Caco-2 (cell line): ENCODE measurements at regions of chr16 and their contacts with region 1.

Region 1: GRCh38 chr16:81885976-81886586 is 107.0 kb downstream of the PLCG2 start:
- DNase-seq: peak in 1 of 2 experiments; percentile 65
- H3K4me3 ChIP-seq: no peak overlapping the region
- H3K4me3 Mint-ChIP-seq: no peak overlapping the region
- H3K27ac Mint-ChIP-seq: no peak overlapping the region
- H3K4me1 ChIP-seq: peaks cover 48% of the 10 kb centered on the region
- H3K4me1 Mint-ChIP-seq: peaks cover 41% of the 10 kb centered on the region
- H3K27me3 ChIP-seq: no peaks in the 10 kb centered on the region
- H3K27me3 Mint-ChIP-seq: no peaks in the 10 kb centered on the region
- CTCF ChIP-seq: peak; percentile 67 to 82

Region 2: DNA sequence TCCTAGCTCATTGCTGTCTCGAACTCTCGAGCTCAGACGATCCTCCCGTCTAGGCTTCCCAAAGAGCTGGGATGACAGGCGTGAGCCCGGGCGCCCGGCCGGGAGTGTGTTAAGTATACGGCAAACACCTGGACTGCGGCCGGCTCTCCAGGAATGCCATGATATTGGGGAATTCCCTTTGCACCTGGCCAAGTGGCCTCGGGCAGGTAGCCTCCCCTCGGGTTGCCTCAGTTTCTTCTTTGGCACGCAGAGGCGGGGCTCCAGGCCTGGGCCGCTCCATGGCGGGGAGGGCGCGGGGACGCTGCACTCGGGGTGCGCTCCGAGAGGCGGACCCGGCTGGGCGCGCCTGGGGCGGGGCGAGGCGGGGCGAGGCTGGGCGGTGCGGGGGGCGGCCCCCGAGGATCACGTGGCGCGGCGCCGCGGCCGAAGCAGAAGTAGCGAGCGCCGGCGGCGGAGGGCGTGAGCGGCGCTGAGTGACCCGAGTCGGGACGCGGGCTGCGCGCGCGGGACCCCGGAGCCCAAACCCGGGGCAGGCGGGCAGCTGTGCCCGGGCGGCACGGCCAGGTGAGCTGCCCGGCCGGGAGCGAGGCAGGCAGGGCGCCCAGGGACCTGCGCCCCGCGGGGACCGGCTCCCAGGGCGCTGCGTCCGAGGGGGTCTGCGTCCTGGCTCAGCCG is 107.1 kb before region 1 on chr16 and contains the start of gene PLCG2:
- CTCF ChIA-PET with region 1: interaction called, 4 read pairs
- POLR2A ChIA-PET with region 1: no interaction called
- intact Hi-C with region 1: loop called (anchors 5 kb)
- DNase-seq: peak; percentile 80 to 91
- H3K4me3 ChIP-seq: peak within 1 kb of the TSS; percentile 72
- H3K4me3 Mint-ChIP-seq: peak within 1 kb of the TSS; percentile 73
- H3K27ac Mint-ChIP-seq: peak within 1 kb of the TSS; percentile 67
- H3K4me1 ChIP-seq: peaks cover 7% of the 10 kb centered on the region
- H3K4me1 Mint-ChIP-seq: peaks cover 19% of the 10 kb centered on the region
- H3K27me3 ChIP-seq: 0 out of 2 replicates have a peak, but pooled peaks cover 1% of the 10 kb centered on the region
- H3K27me3 Mint-ChIP-seq: peaks cover 6% of the 10 kb centered on the region
- CTCF ChIP-seq: no peak
- total RNA-seq, gene PLCG2: 10.3 and 14.4 TPM in 2 replicates

Region 3: DNA sequence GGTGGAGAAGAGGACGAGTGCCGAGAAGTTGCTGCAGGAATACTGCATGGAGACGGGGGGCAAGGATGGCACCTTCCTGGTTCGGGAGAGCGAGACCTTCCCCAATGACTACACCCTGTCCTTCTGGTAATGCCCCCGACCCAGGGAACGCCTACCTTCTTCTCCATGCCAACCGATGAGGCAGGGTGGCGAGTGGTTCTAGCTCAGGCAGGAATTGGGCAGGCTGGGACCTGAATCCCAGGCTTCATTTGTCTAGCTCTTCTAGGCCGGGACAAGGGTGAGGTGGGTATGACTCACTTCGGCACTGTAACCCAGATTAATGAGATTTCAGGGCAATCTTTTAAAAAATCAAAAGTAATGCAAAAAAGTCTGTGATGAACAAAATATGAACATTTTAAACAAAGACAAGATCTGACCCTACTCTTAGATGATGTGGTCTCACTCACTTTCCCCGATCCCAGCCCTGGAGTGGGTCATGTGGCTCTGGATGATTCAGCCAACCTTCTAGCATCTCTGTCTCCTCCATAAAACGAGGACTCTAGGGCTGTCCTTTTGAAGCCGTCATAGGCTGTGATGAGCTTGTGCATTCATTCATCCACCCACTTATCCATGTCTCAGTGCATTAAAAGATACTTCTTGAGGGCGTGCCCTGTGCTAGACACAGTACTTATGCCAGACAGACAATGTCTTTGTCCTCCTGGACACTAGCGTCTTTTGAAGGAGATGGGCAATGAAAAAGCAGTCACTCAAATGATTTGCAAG is 22.6 kb after region 1 on chr16:
- CTCF ChIA-PET with region 1: no interaction called
- POLR2A ChIA-PET with region 1: no interaction called
- intact Hi-C with region 1: no loop called
- DNase-seq: no peak
- H3K4me3 ChIP-seq: no peak overlapping the region
- H3K4me3 Mint-ChIP-seq: no peak overlapping the region
- H3K27ac Mint-ChIP-seq: no peak overlapping the region
- H3K4me1 ChIP-seq: no peaks in the 10 kb centered on the region
- H3K4me1 Mint-ChIP-seq: no peaks in the 10 kb centered on the region
- H3K27me3 ChIP-seq: no peaks in the 10 kb centered on the region
- H3K27me3 Mint-ChIP-seq: no peaks in the 10 kb centered on the region
- CTCF ChIP-seq: no peak

Region 4: DNA sequence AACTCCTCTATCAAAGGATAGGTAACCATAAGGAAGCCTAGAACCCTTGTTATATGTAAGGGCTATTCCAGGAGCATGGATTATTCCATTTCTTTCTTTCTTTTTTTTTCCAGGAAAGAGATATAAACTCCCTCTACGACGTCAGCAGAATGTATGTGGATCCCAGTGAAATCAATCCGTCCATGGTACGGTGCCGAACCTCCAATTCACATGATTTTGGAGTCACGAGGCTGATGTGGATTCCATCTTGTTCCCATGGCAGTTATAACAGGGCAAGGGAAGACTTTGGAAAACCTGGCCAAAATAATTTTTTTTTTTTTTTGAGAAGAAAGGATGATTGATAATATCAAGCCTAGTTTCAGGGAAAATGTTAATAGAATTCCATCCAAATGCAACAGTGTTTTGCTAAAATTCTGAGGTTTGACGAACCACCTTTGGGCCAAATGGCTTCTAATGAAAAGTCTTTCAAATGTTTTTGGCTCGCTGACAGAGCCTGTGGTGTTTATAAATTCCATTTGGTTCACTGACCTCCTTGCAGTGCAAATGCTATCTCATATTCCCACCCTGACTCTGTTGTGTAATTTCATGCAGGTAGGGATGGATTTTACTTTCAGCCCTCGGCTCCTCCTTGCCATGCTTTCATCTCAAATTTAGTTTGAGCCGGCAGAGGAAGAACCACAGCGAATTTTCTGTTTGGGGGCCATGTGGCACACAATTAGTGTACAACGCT is 35.2 kb after region 1 on chr16:
- CTCF ChIA-PET with region 1: no interaction called
- POLR2A ChIA-PET with region 1: no interaction called
- intact Hi-C with region 1: no loop called
- DNase-seq: no peak
- H3K4me3 ChIP-seq: no peak overlapping the region
- H3K4me3 Mint-ChIP-seq: no peak overlapping the region
- H3K27ac Mint-ChIP-seq: no peak overlapping the region
- H3K4me1 ChIP-seq: no peaks in the 10 kb centered on the region
- H3K4me1 Mint-ChIP-seq: no peaks in the 10 kb centered on the region
- H3K27me3 ChIP-seq: no peaks in the 10 kb centered on the region
- H3K27me3 Mint-ChIP-seq: no peaks in the 10 kb centered on the region
- CTCF ChIP-seq: no peak

Region 5: DNA sequence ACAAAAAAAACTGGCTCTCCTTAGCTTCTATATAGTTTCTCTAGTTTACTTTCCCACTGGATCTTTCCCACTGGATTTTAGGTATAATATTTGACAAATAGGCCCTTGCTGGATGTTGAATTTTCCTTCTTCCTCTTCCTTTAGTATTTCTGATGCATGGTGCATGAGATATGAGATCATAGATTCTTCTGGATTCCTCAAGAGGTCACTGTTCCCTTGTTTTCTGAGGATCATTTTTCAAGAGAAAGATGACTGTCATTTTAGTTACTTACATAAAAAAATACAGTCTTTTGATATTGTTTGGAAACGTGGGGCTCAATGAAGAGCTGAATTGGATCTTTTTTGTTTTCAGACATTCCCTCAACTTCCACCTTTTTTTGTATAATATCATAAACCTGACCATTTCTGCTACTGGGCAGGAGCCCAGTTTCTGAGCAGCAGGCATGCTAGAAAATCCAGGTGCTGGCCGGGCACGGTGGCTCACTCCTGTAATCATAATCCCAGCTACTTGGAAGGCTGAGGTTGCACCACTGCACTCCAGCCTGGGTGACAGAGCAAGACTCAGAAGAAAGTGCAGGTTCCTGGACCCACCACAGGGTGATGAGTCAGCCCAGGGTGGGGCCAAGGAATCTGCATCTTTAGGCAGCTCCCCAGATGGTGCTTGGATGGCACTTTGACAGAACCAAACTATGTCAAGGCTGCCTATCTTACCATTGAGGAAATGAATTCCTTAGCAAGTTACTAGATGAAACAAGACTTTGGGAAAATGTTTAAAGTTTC is 54.9 kb after region 1 on chr16:
- CTCF ChIA-PET with region 1: no interaction called
- POLR2A ChIA-PET with region 1: no interaction called
- intact Hi-C with region 1: loop called (anchors 1 kb)
- DNase-seq: peak in 1 of 2 experiments; percentile 43
- H3K4me3 ChIP-seq: no peak overlapping the region
- H3K4me3 Mint-ChIP-seq: no peak overlapping the region
- H3K27ac Mint-ChIP-seq: no peak overlapping the region
- H3K4me1 ChIP-seq: no peaks in the 10 kb centered on the region
- H3K4me1 Mint-ChIP-seq: peaks cover 7% of the 10 kb centered on the region
- H3K27me3 ChIP-seq: no peaks in the 10 kb centered on the region
- H3K27me3 Mint-ChIP-seq: no peaks in the 10 kb centered on the region
- CTCF ChIP-seq: peak; percentile 51 to 55

Region 6: DNA sequence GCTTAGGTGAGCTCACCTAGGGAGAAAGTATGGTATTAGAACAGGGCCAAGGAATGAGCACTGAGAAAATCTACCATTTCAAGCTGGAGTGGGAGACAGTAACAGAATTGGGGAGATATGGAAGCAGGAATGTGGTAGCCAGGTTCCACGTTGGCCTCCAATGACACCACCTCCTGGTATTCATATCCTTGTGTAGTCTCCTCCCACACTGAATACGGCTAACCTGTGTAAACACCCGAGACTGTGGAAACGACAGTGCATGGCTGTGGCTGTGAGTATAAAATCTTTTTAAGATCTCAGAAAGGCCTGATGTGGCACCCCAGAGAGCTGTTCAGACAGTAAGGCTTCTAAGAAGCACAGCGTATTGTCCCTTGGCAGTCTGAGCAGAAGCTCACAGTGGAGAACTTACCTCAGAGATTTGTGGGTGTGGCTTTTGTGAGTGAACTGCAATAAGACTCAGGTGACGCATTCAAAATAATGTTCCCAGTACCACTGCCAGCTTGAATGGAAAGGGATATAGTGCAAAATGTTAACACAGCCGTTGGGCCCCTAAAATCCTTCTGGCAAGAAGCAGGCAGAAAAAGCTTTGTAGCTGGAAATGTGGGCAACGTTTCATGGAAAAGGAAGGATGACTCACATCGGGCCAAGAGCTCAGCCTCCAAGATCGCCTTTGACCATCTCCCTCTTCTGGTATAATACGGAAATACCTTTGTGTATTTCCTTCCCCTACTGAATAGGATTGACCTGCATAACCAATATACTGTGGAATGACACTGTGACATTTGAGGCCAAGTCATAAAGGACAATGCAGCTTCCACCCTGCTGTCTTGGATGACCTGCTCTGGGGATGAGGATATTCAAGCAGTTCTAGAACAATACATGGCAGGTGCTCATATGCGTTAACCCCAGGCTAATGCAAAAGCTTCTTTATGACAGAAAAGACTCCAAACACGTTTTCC is 110.9 kb after region 1 on chr16:
- CTCF ChIA-PET with region 1: no interaction called
- POLR2A ChIA-PET with region 1: no interaction called
- intact Hi-C with region 1: loop called (anchors 1 kb)
- DNase-seq: peak in 1 of 2 experiments; percentile 36
- H3K4me3 ChIP-seq: no peak overlapping the region
- H3K4me3 Mint-ChIP-seq: no peak overlapping the region
- H3K27ac Mint-ChIP-seq: no peak overlapping the region
- H3K4me1 ChIP-seq: peaks cover 21% of the 10 kb centered on the region
- H3K4me1 Mint-ChIP-seq: peaks cover 17% of the 10 kb centered on the region
- H3K27me3 ChIP-seq: no peaks in the 10 kb centered on the region
- H3K27me3 Mint-ChIP-seq: no peaks in the 10 kb centered on the region
- CTCF ChIP-seq: peak; percentile 32 to 49

Region 7: GRCh38 chr16:82229796-82230619 is 343.9 kb after region 1 on chr16:
- CTCF ChIA-PET with region 1: no interaction called
- POLR2A ChIA-PET with region 1: no interaction called
- intact Hi-C with region 1: loop called (anchors 1 kb)
- DNase-seq: peak; percentile 77 to 84
- H3K4me3 ChIP-seq: no peak overlapping the region
- H3K4me3 Mint-ChIP-seq: no peak overlapping the region
- H3K27ac Mint-ChIP-seq: no peak overlapping the region
- H3K4me1 ChIP-seq: no peaks in the 10 kb centered on the region
- H3K4me1 Mint-ChIP-seq: no peaks in the 10 kb centered on the region
- H3K27me3 ChIP-seq: no peaks in the 10 kb centered on the region
- H3K27me3 Mint-ChIP-seq: peaks cover 9% of the 10 kb centered on the region
- CTCF ChIP-seq: peak; percentile 97 to 98